ENCODE measurements at regions of chr6 and their contacts with region 1.

Region 1: DNA sequence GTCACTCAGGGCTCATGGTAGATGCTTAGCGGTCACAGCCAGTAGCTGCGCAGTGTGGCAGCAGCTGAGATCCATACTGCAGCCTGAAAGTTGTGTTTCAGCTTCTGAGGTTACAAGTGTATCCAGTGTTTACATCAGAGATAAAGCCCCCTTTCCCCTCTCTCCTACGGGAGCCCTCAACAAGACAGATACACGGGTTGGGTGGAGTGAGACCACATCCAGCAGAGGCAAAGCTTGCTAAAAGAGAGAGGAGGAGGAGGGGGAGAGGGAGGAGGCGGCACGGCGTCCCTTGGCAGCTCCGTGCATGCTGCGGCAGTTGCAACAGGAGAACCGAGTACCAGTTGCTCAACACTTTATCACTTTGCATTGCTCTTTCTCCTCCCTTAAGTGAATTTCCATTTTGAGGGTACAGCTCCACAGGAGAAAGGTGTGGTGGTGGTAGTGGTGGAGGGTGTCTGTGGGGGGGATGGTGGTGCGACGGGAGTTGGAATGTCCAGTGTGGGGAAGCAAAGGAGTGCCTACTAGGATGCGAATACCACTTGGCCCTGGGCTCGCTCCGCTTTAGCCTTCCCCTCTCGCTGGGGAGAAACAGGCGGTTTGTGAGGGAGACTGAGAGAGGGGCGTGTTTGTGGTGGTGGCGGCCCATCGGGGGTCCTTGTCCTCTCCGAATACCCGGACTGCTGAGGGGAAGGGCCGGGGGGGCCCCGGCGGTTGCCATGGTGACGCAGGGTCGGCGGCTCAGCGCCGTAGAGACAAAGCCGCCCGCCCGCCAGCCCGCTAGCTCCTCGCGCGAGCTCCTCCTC is 405 bp upstream of the RNF182 start:
- DNase-seq: peak; percentile 14
- H3K4me3 Mint-ChIP-seq: peak overlapping the region; percentile 82
- H3K27ac Mint-ChIP-seq: peak overlapping the region; percentile 59
- H3K4me1 Mint-ChIP-seq: peaks cover 15% of the 10 kb centered on the region
- H3K27me3 Mint-ChIP-seq: peaks cover 71% of the 10 kb centered on the region

Region 2: GRCh38 chr6:13908955-13909381 is 15.4 kb before region 1 on chr6:
- intact Hi-C with region 1: loop called (anchors 2 kb)
- DNase-seq: peak; percentile 10
- H3K4me3 Mint-ChIP-seq: no peak overlapping the region
- H3K27ac Mint-ChIP-seq: no peak overlapping the region
- H3K4me1 Mint-ChIP-seq: no peaks in the 10 kb centered on the region
- H3K27me3 Mint-ChIP-seq: peaks cover 35% of the 10 kb centered on the region

Region 3: GRCh38 chr6:13965582-13966127 is 41.3 kb after region 1 on chr6:
- intact Hi-C with region 1: no loop called
- DNase-seq: no peak
- H3K4me3 Mint-ChIP-seq: no peak overlapping the region
- H3K27ac Mint-ChIP-seq: no peak overlapping the region
- H3K4me1 Mint-ChIP-seq: no peaks in the 10 kb centered on the region
- H3K27me3 Mint-ChIP-seq: peaks cover 17% of the 10 kb centered on the region

Measured in activated T-helper 1 cell treated with anti-CD3 and anti-CD28 coated beads, Interleukin-12 subunit alpha, Interleukin-12 subunit beta, Interleukin-2, Interleukin-4 antibody, amounts not matched to agents 30 ng/mL and 10 ng/mL and 1 ng/mL, durations not matched to agents 14 hours and 24 hours and 36 hours (primary cell).